ENCODE measurements at regions of chr6 and their contacts with region 1.

Region 1: GRCh38 chr6:158207422-158207788 is 39.3 kb downstream of the GTF2H5 start:
- DNase-seq: no peak
- H3K4me3 ChIP-seq: no peak overlapping the region
- H3K27ac ChIP-seq: no peak overlapping the region
- H3K4me1 ChIP-seq: peaks cover 0 to 4% (median under 1%) of the 10 kb centered on the region in 4 experiments; a peak in 3 of 7 replicates
- H3K27me3 ChIP-seq: no peaks in the 10 kb centered on the region
- CTCF ChIP-seq: no peak
- EP300 ChIP-seq: no peak
- POLR2A ChIP-seq: no peak
- RAD21 ChIP-seq: no peak

Region 2: DNA sequence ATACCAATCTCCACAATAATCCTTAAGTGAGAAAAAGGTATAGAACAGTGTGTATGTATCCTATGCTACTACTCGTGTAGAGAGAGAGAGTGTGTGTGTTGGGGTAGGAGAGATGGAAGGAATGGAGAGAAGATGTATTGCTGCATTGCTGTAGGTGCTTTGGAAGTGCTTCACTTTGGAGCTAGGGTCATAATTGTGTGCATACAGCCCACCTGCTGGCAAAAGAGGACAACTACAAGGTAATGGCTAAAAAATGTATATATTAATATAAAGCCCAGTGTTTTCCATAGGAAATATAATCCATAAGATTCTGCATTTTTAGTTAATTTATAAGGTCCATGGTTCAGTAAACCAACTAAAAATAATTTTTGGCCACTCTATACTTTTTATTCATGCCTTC is 75.5 kb before region 1 on chr6:
- CTCF ChIA-PET with region 1: interaction called, 13 read pairs
- POLR2A ChIA-PET with region 1: no interaction called
- DNase-seq: no peak
- H3K4me3 ChIP-seq: no peak overlapping the region
- H3K27ac ChIP-seq: no peak overlapping the region
- H3K4me1 ChIP-seq: no peaks in the 10 kb centered on the region
- H3K27me3 ChIP-seq: no peaks in the 10 kb centered on the region
- CTCF ChIP-seq: peak in 1 of 3 experiments; percentile 27; a peak in 1 of 4 replicates
- EP300 ChIP-seq: no peak
- POLR2A ChIP-seq: no peak
- RAD21 ChIP-seq: peak; percentile 21 to 39; a peak in 2 of 4 replicates

Region 3: DNA sequence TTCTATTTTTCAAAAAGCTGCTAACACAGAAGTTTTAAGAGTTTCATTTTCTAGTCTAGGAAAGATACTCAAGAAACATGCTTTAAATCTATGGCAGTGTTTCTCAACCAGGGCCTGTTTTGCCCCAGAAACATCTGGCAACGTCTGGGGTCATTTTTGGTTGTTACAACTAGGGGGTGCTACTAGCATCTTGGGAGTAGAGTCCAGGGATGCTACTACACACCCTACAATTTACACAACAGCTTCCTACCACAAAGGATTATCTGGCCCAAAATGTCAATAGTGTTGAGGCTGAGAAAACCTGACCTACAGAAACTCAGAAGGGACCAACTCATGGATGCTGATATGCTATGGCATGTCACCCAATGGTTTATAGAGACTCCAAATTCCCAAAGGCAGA is 63.7 kb before region 1 on chr6:
- CTCF ChIA-PET with region 1: interaction called, 50 read pairs
- POLR2A ChIA-PET with region 1: no interaction called
- DNase-seq: no peak
- H3K4me3 ChIP-seq: no peak overlapping the region
- H3K27ac ChIP-seq: no peak overlapping the region
- H3K4me1 ChIP-seq: no peaks in the 10 kb centered on the region
- H3K27me3 ChIP-seq: no peaks in the 10 kb centered on the region
- CTCF ChIP-seq: peak; percentile 24 to 71 (median 71)
- EP300 ChIP-seq: no peak
- POLR2A ChIP-seq: no peak
- RAD21 ChIP-seq: peak; percentile 69 to 79

Region 4: GRCh38 chr6:158150701-158151100 is 56.7 kb before region 1 on chr6:
- CTCF ChIA-PET with region 1: interaction called, 50 read pairs
- POLR2A ChIA-PET with region 1: no interaction called
- DNase-seq: no peak
- H3K4me3 ChIP-seq: no peak overlapping the region
- H3K27ac ChIP-seq: no peak overlapping the region
- H3K4me1 ChIP-seq: peaks cover 0 to 3% (median 0%) of the 10 kb centered on the region in 4 experiments; a peak in 1 of 7 replicates
- H3K27me3 ChIP-seq: no peaks in the 10 kb centered on the region
- CTCF ChIP-seq: no peak
- EP300 ChIP-seq: no peak
- POLR2A ChIP-seq: no peak
- RAD21 ChIP-seq: no peak

Region 5: DNA sequence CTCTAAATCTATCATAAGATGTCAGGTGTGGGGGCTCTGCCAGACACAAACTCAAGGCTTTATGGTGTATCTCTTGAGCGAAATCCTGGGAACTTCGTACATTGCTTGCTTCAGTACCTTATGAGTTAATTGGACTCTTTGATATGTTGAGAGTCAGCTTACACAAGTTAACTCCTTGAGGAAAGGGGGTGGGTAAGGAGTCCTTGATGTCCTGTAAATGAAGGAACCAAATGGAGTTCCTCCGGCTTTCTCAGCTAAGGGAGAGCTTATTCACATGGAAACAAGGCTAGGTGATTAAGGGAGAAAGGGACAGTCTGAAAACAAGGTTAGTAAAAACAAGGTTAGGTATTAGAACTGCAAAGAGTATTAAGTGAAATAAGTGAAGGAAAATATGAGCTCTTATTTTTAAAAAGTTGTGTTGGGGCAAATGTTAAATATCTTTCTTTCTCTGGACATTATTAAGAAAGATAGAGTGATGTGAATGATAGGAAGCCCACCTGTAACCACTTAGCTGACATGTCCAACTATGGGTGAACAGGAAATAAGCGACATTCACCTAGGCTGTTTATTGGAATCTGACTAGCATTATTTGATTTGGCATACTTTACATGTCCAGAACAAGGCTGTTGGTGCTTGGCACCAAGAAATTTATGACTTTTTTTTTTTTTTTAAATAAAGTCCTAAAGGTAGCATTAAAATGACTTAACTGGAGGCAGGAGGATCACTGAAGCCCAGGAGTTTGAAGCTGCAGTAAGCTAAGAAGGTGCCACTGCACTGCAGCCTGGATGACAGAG is 12.7 kb before region 1 on chr6:
- CTCF ChIA-PET with region 1: interaction called, 20 read pairs
- POLR2A ChIA-PET with region 1: no interaction called
- DNase-seq: no peak
- H3K4me3 ChIP-seq: peak overlapping the region; percentile 12 to 47 (median 25); a peak in 6 of 8 replicates
- H3K27ac ChIP-seq: no peak overlapping the region
- H3K4me1 ChIP-seq: peaks cover 0 to 10% (median 3%) of the 10 kb centered on the region in 4 experiments; a peak in 3 of 7 replicates
- H3K27me3 ChIP-seq: no peaks in the 10 kb centered on the region
- CTCF ChIP-seq: no peak
- EP300 ChIP-seq: no peak
- POLR2A ChIP-seq: no peak
- RAD21 ChIP-seq: no peak

Region 6: DNA sequence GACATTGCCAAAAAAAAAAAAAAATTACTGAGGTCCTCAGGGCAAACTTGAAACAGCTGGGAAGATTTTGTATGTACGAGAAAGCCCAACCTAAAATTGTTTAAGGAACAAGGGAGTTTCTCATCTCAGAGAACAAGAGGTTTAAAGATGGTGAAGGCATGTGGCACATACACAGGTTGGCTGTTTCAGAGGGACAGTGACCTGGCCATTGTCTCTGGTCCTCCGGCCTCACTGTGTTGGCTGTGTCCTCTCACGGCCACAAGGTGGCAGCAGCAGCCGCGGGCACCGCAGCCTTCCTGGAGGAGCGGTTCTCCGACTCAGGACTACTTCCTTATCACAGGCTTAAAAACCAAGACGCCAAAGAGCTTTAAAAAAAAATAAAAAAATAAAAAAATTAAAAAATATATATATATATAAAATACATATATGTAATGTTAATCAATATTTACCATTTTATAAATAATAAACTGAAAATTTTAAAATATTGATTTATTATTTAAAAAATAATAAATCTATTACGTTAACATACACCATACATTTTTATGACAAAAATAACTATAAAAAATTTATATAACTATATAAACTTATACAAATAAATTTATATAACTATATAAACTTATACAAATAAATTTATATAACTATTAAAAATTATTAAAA is 13.5 kb after region 1 on chr6:
- CTCF ChIA-PET with region 1: interaction called, 15 read pairs
- POLR2A ChIA-PET with region 1: no interaction called
- DNase-seq: peak; percentile 58 to 90
- H3K4me3 ChIP-seq: no peak overlapping the region
- H3K27ac ChIP-seq: no peak overlapping the region
- H3K4me1 ChIP-seq: no peaks in the 10 kb centered on the region
- H3K27me3 ChIP-seq: no peaks in the 10 kb centered on the region
- CTCF ChIP-seq: peak; percentile 91 to 99 (median 93)
- EP300 ChIP-seq: no peak
- POLR2A ChIP-seq: no peak
- RAD21 ChIP-seq: peak; percentile 99

Measured in H1 (cell line).